ENCODE measurements at regions of chr6 and their contacts with region 1.

Region 1: GRCh38 chr6:53484476-53485280 is 60.2 kb downstream of the GCLC start:
- DNase-seq: no peak
- H3K4me3 ChIP-seq: no peak overlapping the region
- H3K27ac ChIP-seq: no peak overlapping the region
- H3K27me3 ChIP-seq: peaks cover 12% of the 10 kb centered on the region
- CTCF ChIP-seq: peak; percentile 98

Region 2: GRCh38 chr6:53095716-53096115 is 389.0 kb before region 1 on chr6:
- CTCF ChIA-PET with region 1: interaction called, 11 read pairs
- POLR2A ChIA-PET with region 1: no interaction called
- DNase-seq: no peak
- H3K4me3 ChIP-seq: no peak overlapping the region
- H3K27ac ChIP-seq: no peak overlapping the region
- H3K27me3 ChIP-seq: no peaks in the 10 kb centered on the region
- CTCF ChIP-seq: no peak

Region 3: DNA sequence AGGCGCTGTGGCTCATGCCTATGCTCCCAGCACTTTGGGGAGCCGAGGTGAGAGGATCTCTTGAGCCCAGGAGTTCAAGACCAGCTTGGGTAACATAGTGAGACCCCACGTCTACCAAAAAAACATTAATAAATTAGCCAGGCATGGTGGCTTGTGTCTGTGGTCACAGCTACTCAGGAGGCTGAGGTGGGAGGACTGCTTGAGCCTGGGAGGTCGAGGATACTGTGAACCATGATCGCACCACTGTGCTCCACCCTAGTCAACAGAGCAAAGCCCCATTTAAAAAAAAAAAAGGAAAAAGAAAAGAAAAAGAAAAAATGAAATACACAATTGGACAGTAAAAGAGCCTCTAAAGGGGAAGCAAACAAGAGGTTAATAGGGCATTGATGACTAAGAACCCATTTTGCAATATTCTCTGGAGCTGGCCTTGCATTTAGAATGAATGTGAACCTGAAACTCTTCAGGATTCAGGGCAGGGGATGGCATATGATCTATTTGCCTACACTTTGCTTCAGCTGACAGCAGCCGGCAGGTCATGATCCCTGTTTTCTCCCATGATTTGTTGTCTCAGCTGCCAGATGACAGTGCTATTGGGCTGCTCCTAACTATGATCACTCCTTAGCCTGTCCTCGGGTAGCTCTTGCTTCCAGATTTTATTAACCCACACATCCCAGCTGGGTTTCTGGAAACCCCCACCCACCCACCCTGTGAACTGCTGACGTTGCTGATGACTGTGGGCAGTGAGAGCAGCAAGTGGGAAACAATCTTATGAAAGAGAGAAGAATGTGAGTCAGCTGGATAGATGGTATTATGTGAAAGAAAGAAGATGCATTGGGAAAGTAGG is 52.1 kb before region 1 on chr6:
- CTCF ChIA-PET with region 1: interaction called, 15 read pairs
- POLR2A ChIA-PET with region 1: no interaction called
- DNase-seq: peak; percentile 37
- H3K4me3 ChIP-seq: no peak overlapping the region
- H3K27ac ChIP-seq: peak overlapping the region; percentile 68
- H3K27me3 ChIP-seq: no peaks in the 10 kb centered on the region
- CTCF ChIP-seq: no peak

Region 4: DNA sequence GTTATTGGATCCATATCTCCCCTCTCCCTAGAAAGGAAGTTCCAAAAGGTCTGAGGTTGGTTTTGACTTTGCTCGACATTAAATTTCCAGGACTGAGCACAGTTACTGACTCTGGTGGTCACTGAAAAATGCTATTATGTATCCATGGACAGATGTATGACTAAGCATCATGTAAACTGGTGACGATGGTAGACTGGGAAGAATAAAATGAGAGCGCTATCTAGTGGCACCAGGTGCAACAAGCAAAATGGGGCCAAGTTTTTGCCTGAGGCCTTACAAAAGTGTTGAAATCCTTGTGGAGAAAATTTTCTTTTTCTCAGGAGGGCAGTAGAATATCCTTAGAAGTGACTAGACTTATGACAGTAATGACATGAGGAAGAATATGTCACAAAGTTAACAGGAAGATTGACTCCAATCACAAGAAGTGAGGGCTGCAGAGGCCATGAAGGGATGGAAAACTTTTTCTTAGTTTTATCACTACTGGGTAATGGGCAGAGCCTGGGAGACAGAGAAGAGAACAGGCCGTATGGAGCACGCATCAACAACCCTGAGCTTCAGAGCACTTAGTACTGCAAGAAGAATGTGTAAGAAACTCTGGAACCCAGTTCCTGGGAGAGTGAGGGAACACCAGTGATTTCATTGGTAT is 47.0 kb before region 1 on chr6:
- CTCF ChIA-PET with region 1: interaction called, 15 read pairs
- POLR2A ChIA-PET with region 1: no interaction called
- DNase-seq: peak; percentile 60
- H3K4me3 ChIP-seq: no peak overlapping the region
- H3K27ac ChIP-seq: no peak overlapping the region
- H3K27me3 ChIP-seq: no peaks in the 10 kb centered on the region
- CTCF ChIP-seq: peak; percentile 75